ENCODE measurements at regions of chr21 and their contacts with region 1.

Region 1: DNA sequence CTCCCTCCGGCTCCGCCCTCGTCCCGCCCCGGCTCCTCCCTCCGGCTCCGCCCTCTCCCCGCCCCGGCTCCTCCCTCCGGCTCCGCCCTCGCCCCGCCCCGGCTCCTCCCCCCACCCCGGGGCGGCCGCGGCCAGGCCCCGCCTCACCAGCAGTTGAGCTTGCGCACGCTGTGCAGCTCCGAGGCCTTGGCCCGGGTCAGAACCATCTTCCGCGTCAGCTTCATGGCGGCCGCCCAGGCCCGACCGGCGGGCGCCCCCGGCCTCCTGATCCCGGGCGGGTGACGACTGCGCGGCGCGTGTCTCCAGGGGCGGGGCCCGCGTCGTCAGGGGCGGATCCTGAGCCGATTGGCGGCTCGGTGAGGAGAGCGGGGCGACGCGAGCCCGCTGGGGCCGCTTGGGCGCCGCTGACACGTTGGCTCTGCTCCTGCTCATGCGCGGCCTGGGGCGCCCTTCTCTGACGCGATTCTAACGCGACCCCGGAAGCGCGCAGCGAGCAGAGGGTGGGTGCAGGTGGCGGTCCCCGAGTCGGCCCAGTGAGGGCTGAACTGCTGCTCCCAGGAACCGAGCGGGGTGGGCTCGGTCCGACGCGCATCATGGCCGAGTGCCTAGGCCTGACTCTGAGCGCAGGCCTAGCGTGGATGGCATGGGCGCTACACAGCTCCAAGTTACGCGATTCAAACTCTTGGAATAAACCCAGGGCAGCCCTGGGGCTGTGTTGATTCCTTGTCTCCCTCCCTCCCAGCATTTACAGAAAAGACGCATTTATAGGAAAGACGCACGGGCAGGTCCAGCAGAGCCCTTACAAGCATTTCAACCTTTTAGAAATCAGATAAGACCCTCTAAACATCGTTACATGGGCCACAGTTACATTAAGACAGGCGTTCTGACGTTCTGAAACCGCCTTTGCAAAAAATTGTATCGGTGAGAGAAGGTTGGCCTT is at the start of gene CFAP410:
- DNase-seq: peak; percentile 79
- ATAC-seq: peak; percentile 94
- H3K4me3 ChIP-seq: peak within 1 kb of the TSS; percentile 87 to 96
- H3K27ac ChIP-seq: peak within 1 kb of the TSS; percentile 99
- H3K4me1 ChIP-seq: peaks cover 14 to 20% of the 10 kb centered on the region in 2 experiments; a peak in 3 of 4 replicates
- H3K27me3 ChIP-seq: no peaks in the 10 kb centered on the region
- CTCF ChIP-seq: no peak
- POLR2A ChIP-seq: peak; percentile 58
- RAD21 ChIP-seq: no peak
- total RNA-seq, gene CFAP410: 15.3 TPM

Region 2: GRCh38 chr21:44303490-44303981 is 35.7 kb before region 1 on chr21:
- CTCF ChIA-PET with region 1: interaction called, 10 read pairs
- POLR2A ChIA-PET with region 1: interaction called, 3 read pairs
- RAD21 ChIA-PET with region 1: no interaction called
- intact Hi-C with region 1: no loop called
- DNase-seq: no peak
- ATAC-seq: no peak
- H3K4me3 ChIP-seq: no peak overlapping the region
- H3K27ac ChIP-seq: no peak overlapping the region
- H3K4me1 ChIP-seq: peaks cover 10 to 35% of the 10 kb centered on the region in 2 experiments
- H3K27me3 ChIP-seq: no peaks in the 10 kb centered on the region
- CTCF ChIP-seq: no peak
- POLR2A ChIP-seq: no peak
- RAD21 ChIP-seq: no peak

Region 3: GRCh38 chr21:44405948-44406872 is 67.0 kb after region 1 on chr21:
- CTCF ChIA-PET with region 1: no interaction called
- POLR2A ChIA-PET with region 1: no interaction called
- RAD21 ChIA-PET with region 1: no interaction called
- intact Hi-C with region 1: no loop called
- DNase-seq: no peak
- ATAC-seq: no peak
- H3K4me3 ChIP-seq: no peak overlapping the region
- H3K27ac ChIP-seq: no peak overlapping the region
- H3K4me1 ChIP-seq: no peaks in the 10 kb centered on the region
- H3K27me3 ChIP-seq: no peaks in the 10 kb centered on the region
- CTCF ChIP-seq: no peak
- POLR2A ChIP-seq: no peak
- RAD21 ChIP-seq: no peak

Region 4: DNA sequence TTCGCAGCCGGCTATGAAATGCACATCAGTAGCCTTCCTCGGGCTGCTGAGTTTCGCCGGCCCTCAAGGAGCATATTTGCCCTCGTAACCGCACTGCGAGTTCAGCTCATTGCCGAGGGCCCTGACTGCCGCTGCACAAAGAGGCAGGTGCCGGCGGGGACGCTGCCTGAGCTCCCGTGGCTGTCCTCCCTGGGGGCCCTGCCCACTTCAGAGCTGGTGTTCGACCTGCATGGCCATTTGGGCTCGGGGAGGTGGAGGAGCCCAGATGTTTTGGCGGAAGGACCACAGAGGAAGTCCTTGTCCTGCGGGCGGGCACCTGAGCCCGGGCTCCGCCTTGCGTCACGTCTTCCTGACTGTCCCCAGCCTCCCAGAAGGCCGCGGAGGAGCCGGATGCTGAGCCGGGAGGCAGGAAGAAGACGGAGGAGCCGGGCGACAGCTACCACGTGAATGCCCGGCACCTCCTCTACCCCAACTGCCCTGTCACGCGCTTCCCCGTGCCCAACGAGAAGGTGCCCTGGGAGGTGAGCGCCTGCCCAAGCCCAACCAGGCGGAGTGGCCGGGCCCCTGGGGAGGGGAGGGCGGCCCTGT is 86.2 kb after region 1 on chr21:
- CTCF ChIA-PET with region 1: no interaction called
- POLR2A ChIA-PET with region 1: interaction called, 4 read pairs
- RAD21 ChIA-PET with region 1: interaction called in 1 of 2 experiments, 3 read pairs
- intact Hi-C with region 1: loop called (anchors 1 kb)
- DNase-seq: peak; percentile 73
- ATAC-seq: peak; percentile 90
- H3K4me3 ChIP-seq: peak overlapping the region; percentile 85 to 88
- H3K27ac ChIP-seq: peak overlapping the region; percentile 88
- H3K4me1 ChIP-seq: peaks cover 4 to 36% of the 10 kb centered on the region in 2 experiments; a peak in 3 of 4 replicates
- H3K27me3 ChIP-seq: no peaks in the 10 kb centered on the region
- CTCF ChIP-seq: no peak
- POLR2A ChIP-seq: no peak
- RAD21 ChIP-seq: no peak

Measured in HCT116 (cell line).